ENCODE measurements at regions of chr6 and their contacts with region 1.

Region 1: DNA sequence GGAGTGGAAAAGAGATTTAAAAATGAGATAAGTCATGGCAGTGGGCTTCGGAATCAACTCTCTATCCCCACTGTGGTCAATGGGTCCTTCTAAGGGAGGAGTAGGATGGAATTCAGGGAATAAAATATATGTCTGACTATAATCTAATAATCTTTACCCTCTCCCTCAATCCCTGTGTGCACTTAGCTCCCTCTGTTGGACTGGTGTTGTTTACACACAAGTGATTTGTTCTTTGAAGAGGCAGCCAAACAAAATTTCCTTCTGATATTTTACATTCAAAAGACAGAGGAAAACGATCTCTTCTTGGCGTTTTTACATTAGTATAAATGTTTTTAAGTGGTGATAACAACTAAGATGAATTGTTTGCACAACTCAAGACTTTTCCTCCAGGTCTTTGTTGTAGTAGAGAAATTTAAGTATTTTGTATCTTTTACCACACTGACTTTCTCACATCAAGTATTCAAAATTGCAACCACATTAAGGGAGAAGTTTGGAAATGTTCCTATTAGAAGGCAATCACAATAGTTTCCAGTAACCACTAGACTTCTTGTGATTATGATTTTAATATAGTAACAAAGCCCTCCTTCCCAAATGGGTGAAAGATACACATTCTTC is 317.8 kb downstream of the CENPW start:
- DNase-seq: no peak
- ATAC-seq: peak; percentile 40; the same call in 1 of the 3 replicates
- H3K4me3 ChIP-seq: no peak overlapping the region
- H3K27ac ChIP-seq: no peak overlapping the region
- H3K4me1 ChIP-seq: no peaks in the 10 kb centered on the region
- H3K27me3 ChIP-seq: no peaks in the 10 kb centered on the region
- CTCF ChIP-seq: peak; percentile 38 to 55 (median 46); a peak in 4 of 6 replicates
- EP300 ChIP-seq: no peak
- POLR2A ChIP-seq: no peak
- RAD21 ChIP-seq: peak; percentile 66

Region 2: GRCh38 chr6:126015863-126016262 is 641.8 kb before region 1 on chr6:
- CTCF ChIA-PET with region 1: no interaction called
- POLR2A ChIA-PET with region 1: no interaction called
- RAD21 ChIA-PET with region 1: no interaction called
- SMC1A ChIA-PET with region 1: no interaction called
- in situ Hi-C with region 1: loop called (anchors 25 kb)
- intact Hi-C with region 1: no loop called
- DNase-seq: no peak
- ATAC-seq: no peak
- H3K4me3 ChIP-seq: no peak overlapping the region
- H3K27ac ChIP-seq: no peak overlapping the region
- H3K4me1 ChIP-seq: no peaks in the 10 kb centered on the region
- H3K27me3 ChIP-seq: no peaks in the 10 kb centered on the region
- CTCF ChIP-seq: no peak
- EP300 ChIP-seq: no peak
- POLR2A ChIP-seq: no peak
- RAD21 ChIP-seq: no peak

Region 3: GRCh38 chr6:126170978-126171382 is 486.7 kb before region 1 on chr6:
- CTCF ChIA-PET with region 1: no interaction called
- POLR2A ChIA-PET with region 1: no interaction called
- RAD21 ChIA-PET with region 1: interaction called, 4 read pairs
- SMC1A ChIA-PET with region 1: no interaction called
- in situ Hi-C with region 1: no loop called
- intact Hi-C with region 1: loop called (anchors 10 kb)
- DNase-seq: peak; percentile 20
- ATAC-seq: peak; percentile 95
- H3K4me3 ChIP-seq: no peak overlapping the region
- H3K27ac ChIP-seq: no peak overlapping the region
- H3K4me1 ChIP-seq: no peaks in the 10 kb centered on the region
- H3K27me3 ChIP-seq: no peaks in the 10 kb centered on the region
- CTCF ChIP-seq: peak; percentile 44 to 57 (median 45)
- EP300 ChIP-seq: no peak
- POLR2A ChIP-seq: no peak
- RAD21 ChIP-seq: peak; percentile 42